Mammary epithelial cell (primary cell): ENCODE measurements at regions of chrX and their contacts with region 1.

Region 1: GRCh38 chrX:71159335-71159734 is 14.7 kb downstream of the NLGN3 start:
- DNase-seq: no peak
- H3K4me3 ChIP-seq: no peak overlapping the region
- H3K27ac ChIP-seq: no peak overlapping the region
- H3K4me1 ChIP-seq: no peaks in the 10 kb centered on the region
- H3K27me3 ChIP-seq: no peaks in the 10 kb centered on the region
- CTCF ChIP-seq: no peak

Region 2: GRCh38 chrX:71128915-71129765 is 30.2 kb before region 1 on chrX:
- CTCF ChIA-PET with region 1: no interaction called
- dilution Hi-C with region 1: no loop called
- in situ Hi-C with region 1: no loop called
- intact Hi-C with region 1: no loop called
- DNase-seq: peak; percentile 31
- H3K4me3 ChIP-seq: no peak overlapping the region
- H3K27ac ChIP-seq: no peak overlapping the region
- H3K4me1 ChIP-seq: no peaks in the 10 kb centered on the region
- H3K27me3 ChIP-seq: no peaks in the 10 kb centered on the region
- CTCF ChIP-seq: peak; percentile 77 to 81

Region 3: GRCh38 chrX:71245159-71245558 is 85.8 kb after region 1 on chrX:
- CTCF ChIA-PET with region 1: no interaction called
- dilution Hi-C with region 1: loop called (anchors 5 kb)
- in situ Hi-C with region 1: no loop called
- intact Hi-C with region 1: no loop called
- DNase-seq: no peak
- H3K4me3 ChIP-seq: no peak overlapping the region
- H3K27ac ChIP-seq: no peak overlapping the region
- H3K4me1 ChIP-seq: no peaks in the 10 kb centered on the region
- H3K27me3 ChIP-seq: no peaks in the 10 kb centered on the region
- CTCF ChIP-seq: no peak